Vagina (tissue), 2 donors: ENCODE measurements at regions of chr2 and their contacts with region 1.

Region 1: GRCh38 chr2:113889471-113890252 is at the start of gene ACTR3:
- DNase-seq: peak; percentile 98
- H3K4me3 ChIP-seq: peak within 1 kb of the TSS; percentile 93 to 95
- H3K27ac ChIP-seq: peak within 1 kb of the TSS; percentile 98
- H3K4me1 ChIP-seq: peaks cover 64% of the 10 kb centered on the region
- H3K27me3 ChIP-seq: no peaks in the 10 kb centered on the region
- CTCF ChIP-seq: no peak
- POLR2A ChIP-seq: peak in 1 of 2 donors; percentile 88
- total RNA-seq, gene ACTR3: 105 TPM

Region 2: DNA sequence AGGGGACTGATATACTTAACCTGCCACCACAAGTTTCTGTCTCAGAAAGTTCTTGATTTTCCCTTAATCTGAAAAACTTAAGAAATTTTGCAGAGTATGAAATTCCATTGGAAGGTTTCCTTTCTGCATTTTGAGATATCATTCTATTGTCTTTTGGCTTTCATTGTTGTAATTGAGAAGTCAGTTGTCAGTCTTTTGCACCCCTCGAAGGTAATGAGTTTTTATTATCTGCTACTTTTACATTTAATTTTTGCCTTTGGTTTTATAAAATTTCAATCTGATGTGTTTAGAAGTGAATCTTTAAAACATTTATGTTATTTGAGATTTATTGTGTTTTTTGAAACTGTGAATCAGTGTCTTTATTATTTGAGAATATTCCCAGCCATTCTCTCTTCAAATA is 889.2 kb before region 1 on chr2:
- intact Hi-C with region 1: no loop called
- DNase-seq: no peak
- H3K4me3 ChIP-seq: no peak overlapping the region
- H3K27ac ChIP-seq: no peak overlapping the region
- H3K4me1 ChIP-seq: no peaks in the 10 kb centered on the region
- H3K27me3 ChIP-seq: no peaks in the 10 kb centered on the region
- CTCF ChIP-seq: no peak
- POLR2A ChIP-seq: no peak

Region 3: DNA sequence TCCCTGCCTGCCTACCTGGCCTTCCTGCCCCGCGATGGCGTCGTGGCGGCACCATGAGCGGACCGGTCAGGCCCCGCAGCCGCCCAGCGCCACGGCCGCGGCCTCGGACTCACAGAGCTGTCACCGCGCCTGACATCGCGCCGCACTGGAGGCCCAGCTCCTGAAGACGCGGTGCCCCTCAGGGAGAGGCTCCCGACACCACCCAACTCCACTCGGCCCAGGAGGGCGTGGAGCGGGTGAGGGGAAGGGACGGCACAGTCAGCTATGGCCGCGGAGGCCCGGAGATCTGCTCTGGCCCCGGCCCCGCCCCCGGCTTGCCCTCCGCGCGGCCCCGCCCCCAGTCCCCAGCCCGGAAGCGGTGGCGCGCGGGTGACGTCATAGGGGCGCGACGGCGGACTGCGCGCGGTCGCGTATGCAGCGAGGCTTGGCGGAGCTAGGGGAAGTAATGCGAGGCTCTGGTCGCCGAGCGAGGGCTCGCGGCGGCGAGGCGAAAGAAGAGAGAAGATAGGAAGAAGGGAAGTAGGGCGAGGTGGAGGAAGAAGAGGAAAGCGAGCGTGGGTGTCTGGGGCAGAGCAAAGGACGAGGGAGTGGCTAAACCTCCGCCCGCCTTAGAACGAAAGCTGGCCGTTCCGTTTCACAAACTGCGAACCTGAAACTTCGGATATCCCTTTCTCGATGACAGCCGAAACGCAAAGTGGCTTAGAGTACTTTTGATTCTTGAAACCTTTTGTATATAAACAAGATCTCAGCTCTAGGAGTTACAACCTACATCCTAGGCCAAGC is 133.1 kb before region 1 on chr2 and contains the start of gene SLC35F5:
- intact Hi-C with region 1: loop called (anchors 5 kb)
- DNase-seq: peak in 1 of 2 donors; percentile 92
- H3K4me3 ChIP-seq: peak within 1 kb of the TSS; percentile 61 to 95
- H3K27ac ChIP-seq: peak within 1 kb of the TSS; percentile 93
- H3K4me1 ChIP-seq: peaks cover 26% of the 10 kb centered on the region
- H3K27me3 ChIP-seq: no peaks in the 10 kb centered on the region
- CTCF ChIP-seq: peak in 1 of 3 experiments; percentile 24
- POLR2A ChIP-seq: no peak
- total RNA-seq, gene SLC35F5: 64.6 TPM